K562 (cell line): ENCODE measurements at regions of chr19 and their contacts with region 1.

Region 1: DNA sequence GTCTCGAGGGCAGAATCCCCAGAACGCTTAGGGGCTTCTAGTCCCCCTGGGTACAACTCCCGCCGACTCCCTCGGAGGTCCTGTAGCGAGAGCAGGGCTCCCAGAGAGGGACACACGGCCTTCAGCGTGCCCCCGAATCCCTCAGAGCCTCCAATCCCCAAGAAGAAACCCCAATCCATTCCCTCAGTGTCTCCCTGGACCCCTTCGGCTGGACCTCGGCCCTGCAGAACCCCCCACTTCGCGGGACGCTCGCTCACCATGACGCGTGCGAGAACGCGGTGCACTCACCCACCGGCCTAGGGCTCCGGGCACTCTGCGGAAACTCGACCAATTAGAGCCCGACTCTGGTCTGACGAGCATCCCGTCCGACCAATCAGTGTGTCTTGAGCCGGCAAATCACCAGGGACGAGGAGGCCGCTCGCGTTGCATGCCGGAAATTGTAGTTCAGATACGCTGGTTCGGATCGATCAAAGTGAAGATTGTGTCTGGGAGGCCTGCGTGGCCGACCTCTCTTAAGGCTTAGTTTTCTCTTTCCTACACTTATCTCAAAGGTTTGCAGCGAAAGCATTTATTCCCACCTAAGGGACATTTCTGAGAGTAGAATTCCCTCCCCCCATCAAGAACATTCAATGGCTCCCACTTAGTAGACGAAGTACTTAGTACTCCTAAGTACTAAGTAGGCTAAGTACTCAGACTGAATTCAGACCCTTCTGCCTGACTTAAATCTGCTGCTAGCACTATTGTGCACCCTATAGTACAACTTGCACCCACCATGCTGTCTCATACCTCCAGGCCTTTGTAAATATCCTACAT is at the start of gene TMEM161A:
- DNase-seq: peak; percentile 99 to 100 (median 99)
- ATAC-seq: peak; percentile 95
- H3K4me3 ChIP-seq: peak within 1 kb of the TSS; percentile 90
- H3K27ac ChIP-seq: peak within 1 kb of the TSS; percentile 91
- H3K4me1 ChIP-seq: peaks cover 15 to 29% of the 10 kb centered on the region in 2 experiments
- H3K27me3 ChIP-seq: no peaks in the 10 kb centered on the region; a peak in 1 of 5 replicates
- CTCF ChIP-seq: no peak
- EP300 ChIP-seq: no peak
- POLR2A ChIP-seq: peak; percentile 94
- RAD21 ChIP-seq: no peak
- polyA plus RNA-seq, gene TMEM161A: 0.63 to 4.7 TPM

Region 2: GRCh38 chr19:18919086-18919899 is 219.1 kb before region 1 on chr19 and contains the starts of genes COPE and DDX49:
- CTCF ChIA-PET with region 1: no interaction called
- POLR2A ChIA-PET with region 1: no interaction called
- in situ Hi-C with region 1: no loop called
- intact Hi-C with region 1: loop called (anchors 5 kb)
- DNase-seq: peak; percentile 97 to 100 (median 98)
- ATAC-seq: peak; percentile 98
- H3K4me3 ChIP-seq: peak within 1 kb of the TSS; percentile 95
- H3K27ac ChIP-seq: peak within 1 kb of the TSS; percentile 90
- H3K4me1 ChIP-seq: peaks cover 8 to 27% of the 10 kb centered on the region in 2 experiments; a peak in 4 of 5 replicates
- H3K27me3 ChIP-seq: no peaks in the 10 kb centered on the region
- CTCF ChIP-seq: no peak
- EP300 ChIP-seq: no peak
- POLR2A ChIP-seq: peak; percentile 95
- RAD21 ChIP-seq: no peak
- polyA plus RNA-seq, gene COPE: 5.8 to 18.3 TPM
- polyA plus RNA-seq, gene DDX49: 1.1 to 6.3 TPM

Region 3: GRCh38 chr19:19053508-19054314 is 84.7 kb before region 1 on chr19:
- CTCF ChIA-PET with region 1: interaction called, 18 read pairs
- POLR2A ChIA-PET with region 1: interaction called, 3 read pairs
- in situ Hi-C with region 1: loop called (anchors 5 kb)
- intact Hi-C with region 1: loop called (anchors 1 kb)
- DNase-seq: peak; percentile 72 to 83 (median 76)
- ATAC-seq: peak; percentile 86
- H3K4me3 ChIP-seq: no peak overlapping the region
- H3K27ac ChIP-seq: no peak overlapping the region
- H3K4me1 ChIP-seq: peaks cover 4 to 51% of the 10 kb centered on the region in 2 experiments; a peak in 4 of 5 replicates
- H3K27me3 ChIP-seq: no peaks in the 10 kb centered on the region
- CTCF ChIP-seq: peak; percentile 84 to 93 (median 88)
- EP300 ChIP-seq: no peak
- POLR2A ChIP-seq: no peak
- RAD21 ChIP-seq: peak; percentile 88 to 94

Region 4: DNA sequence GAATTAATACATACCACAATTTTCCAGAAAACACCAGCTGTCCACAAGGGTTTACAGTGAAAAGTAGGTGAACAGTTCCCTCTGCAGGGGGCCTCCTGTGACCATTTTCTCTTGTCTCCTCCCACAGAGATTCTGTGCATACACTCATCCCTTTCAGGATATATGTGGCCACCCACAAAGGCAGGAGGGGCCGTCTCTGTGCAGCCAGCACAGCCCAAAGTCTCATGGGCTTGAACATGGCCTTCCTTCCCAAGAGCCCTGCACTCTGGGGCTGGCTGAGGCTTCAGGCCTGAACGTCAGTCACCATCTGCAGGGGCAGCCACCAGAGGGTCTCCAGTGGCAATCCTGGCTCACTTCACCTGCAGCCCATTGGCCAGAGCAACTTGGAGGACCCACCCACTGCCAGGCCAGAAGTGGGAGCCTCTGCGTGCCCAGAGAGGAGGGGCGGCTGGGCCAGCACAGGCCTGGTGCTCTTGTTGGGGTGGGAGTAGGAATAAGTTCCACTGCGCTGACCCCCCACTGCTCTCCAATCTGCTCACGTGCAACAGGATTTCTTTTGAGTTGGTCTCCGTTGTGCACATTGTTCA is 25.2 kb before region 1 on chr19:
- CTCF ChIA-PET with region 1: no interaction called
- POLR2A ChIA-PET with region 1: no interaction called
- in situ Hi-C with region 1: no loop called
- intact Hi-C with region 1: loop called (anchors 1 kb)
- DNase-seq: peak; percentile 50 to 72 (median 60)
- ATAC-seq: peak; percentile 87
- H3K4me3 ChIP-seq: no peak overlapping the region
- H3K27ac ChIP-seq: no peak overlapping the region
- H3K4me1 ChIP-seq: peaks cover 12 to 31% of the 10 kb centered on the region in 2 experiments; a peak in 4 of 5 replicates
- H3K27me3 ChIP-seq: no peaks in the 10 kb centered on the region
- CTCF ChIP-seq: peak; percentile 54 to 69 (median 68)
- EP300 ChIP-seq: no peak
- POLR2A ChIP-seq: peak; percentile 44
- RAD21 ChIP-seq: peak; percentile 60 to 71

Region 5: DNA sequence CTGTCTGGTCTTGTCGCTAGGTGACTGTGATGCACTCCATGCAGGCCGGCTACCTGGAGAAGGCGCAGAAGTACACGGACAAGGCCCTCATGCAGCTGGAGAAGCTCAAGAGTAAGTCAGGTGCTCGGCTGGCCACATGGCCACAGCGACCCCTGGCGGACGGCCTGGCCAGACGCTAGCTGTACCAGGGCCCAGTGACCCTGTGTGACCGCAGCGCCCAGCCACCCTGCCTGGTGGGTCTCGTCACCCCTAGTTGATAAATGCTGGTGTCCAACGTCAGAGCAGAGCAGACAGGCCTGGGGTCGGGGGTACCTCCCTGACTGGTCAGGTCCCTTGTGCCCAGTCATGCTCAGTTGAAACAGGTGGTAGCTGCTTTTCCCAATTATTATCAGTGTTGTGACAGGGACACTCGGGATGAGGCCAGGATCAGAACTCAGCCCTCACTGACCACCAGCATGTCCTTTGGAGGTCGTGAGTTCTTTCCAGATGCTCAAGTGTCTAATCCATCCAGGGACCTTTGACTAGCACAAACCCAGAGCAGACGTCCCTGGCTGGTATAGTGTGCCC is 204.5 kb after region 1 on chr19:
- CTCF ChIA-PET with region 1: interaction called, 3 read pairs
- POLR2A ChIA-PET with region 1: no interaction called
- in situ Hi-C with region 1: loop called (anchors 5 kb)
- intact Hi-C with region 1: no loop called
- DNase-seq: peak; percentile 83 to 87 (median 85)
- ATAC-seq: peak; percentile 98
- H3K4me3 ChIP-seq: no peak overlapping the region
- H3K27ac ChIP-seq: no peak overlapping the region
- H3K4me1 ChIP-seq: peaks cover 0 to 29% of the 10 kb centered on the region in 2 experiments; a peak in 1 of 5 replicates
- H3K27me3 ChIP-seq: no peaks in the 10 kb centered on the region
- CTCF ChIP-seq: peak; percentile 88 to 94 (median 92)
- EP300 ChIP-seq: no peak
- POLR2A ChIP-seq: no peak
- RAD21 ChIP-seq: peak; percentile 40 to 77; a peak in 3 of 4 replicates

Region 6: DNA sequence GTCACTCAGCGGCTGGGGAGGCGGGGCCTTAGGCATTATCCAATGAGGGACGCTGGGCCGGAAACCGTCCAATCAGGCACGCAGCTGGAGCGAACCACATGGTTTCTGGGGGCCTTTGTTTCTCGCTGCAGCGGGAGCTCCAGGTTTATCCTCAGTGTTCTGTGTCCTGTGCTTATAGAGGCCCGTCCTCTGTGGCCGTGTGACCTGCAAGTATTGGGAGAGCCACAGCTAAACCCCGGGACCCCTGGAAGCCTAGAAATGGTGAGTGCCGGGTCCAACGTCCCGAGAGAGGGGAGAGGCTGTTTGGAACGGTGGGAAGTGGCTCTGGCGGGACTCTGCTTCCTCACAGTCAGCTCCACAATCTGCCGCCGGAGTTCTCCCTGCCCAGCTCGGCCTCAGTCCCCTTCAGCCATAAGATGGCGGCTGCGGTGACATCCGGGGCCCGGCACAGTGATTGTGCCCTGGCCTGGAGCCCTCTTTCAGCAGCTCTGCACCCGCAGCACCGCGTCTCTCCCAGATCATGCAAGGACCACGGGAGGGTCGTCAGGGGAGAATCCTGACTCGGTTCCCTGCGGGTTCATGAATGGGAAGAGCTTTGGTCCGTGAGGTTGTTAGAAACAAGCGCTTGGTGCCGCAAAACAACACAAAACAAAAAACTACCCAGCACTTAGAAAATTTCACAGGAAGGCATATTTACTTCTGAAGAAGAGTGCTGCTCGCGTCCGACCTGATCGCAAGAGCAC is 727.5 kb after region 1 on chr19 and contains the start of gene ZNF253:
- CTCF ChIA-PET with region 1: no interaction called
- POLR2A ChIA-PET with region 1: no interaction called
- in situ Hi-C with region 1: no loop called
- intact Hi-C with region 1: no loop called
- DNase-seq: peak; percentile 95 to 98 (median 96)
- ATAC-seq: peak; percentile 97
- H3K4me3 ChIP-seq: peak within 1 kb of the TSS; percentile 75
- H3K27ac ChIP-seq: peak within 1 kb of the TSS; percentile 94
- H3K4me1 ChIP-seq: peaks cover 0 to 5% of the 10 kb centered on the region in 2 experiments; a peak in 3 of 5 replicates
- H3K27me3 ChIP-seq: no peaks in the 10 kb centered on the region
- CTCF ChIP-seq: peak in 1 of 3 experiments; percentile 17; a peak in 1 of 6 replicates
- EP300 ChIP-seq: no peak
- POLR2A ChIP-seq: peak; percentile 97
- RAD21 ChIP-seq: peak in 1 of 2 experiments; percentile 20; a peak in 1 of 4 replicates
- polyA plus RNA-seq, gene ZNF253: 4.0 to 6.9 TPM